ENCODE measurements at regions of chr18 and their contacts with region 1.

Region 1: DNA sequence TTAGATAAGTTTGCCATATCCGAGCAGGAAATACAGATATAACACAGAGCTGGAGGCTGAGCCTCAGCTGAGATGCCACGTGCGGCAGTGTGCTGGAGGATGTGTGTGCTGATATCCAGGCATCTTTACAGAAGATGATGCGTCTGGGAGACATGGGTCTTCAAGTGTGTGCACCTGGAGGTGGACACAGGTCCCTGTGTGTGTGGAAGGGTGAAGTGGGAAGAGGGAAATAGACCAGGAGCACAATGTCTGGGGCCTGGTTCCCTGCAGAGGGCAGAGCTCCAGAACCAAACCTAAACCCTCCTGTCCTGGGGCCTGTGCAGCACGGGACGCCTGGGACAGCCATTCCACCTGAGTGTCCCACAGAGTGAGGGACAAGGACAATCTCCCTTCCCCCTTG is 180.3 kb upstream of the RAB12 start:
- DNase-seq: no peak
- H3K4me3 ChIP-seq: no peak overlapping the region
- H3K27ac ChIP-seq: no peak overlapping the region
- H3K4me1 ChIP-seq: no peaks in the 10 kb centered on the region
- H3K27me3 ChIP-seq: no peaks in the 10 kb centered on the region
- CTCF ChIP-seq: no peak
- POLR2A ChIP-seq: no peak

Region 2: GRCh38 chr18:7902399-7902839 is 526.5 kb before region 1 on chr18:
- intact Hi-C with region 1: no loop called
- DNase-seq: no peak
- H3K4me3 ChIP-seq: no peak overlapping the region
- H3K27ac ChIP-seq: no peak overlapping the region
- H3K4me1 ChIP-seq: no peaks in the 10 kb centered on the region
- H3K27me3 ChIP-seq: no peaks in the 10 kb centered on the region
- CTCF ChIP-seq: no peak
- POLR2A ChIP-seq: no peak

Region 3: GRCh38 chr18:8011905-8012304 is 417.0 kb before region 1 on chr18:
- intact Hi-C with region 1: no loop called
- DNase-seq: no peak
- H3K4me3 ChIP-seq: no peak overlapping the region
- H3K27ac ChIP-seq: no peak overlapping the region
- H3K4me1 ChIP-seq: no peaks in the 10 kb centered on the region
- H3K27me3 ChIP-seq: no peaks in the 10 kb centered on the region
- CTCF ChIP-seq: no peak
- POLR2A ChIP-seq: no peak

Region 4: GRCh38 chr18:8367217-8367988 is 61.5 kb before region 1 on chr18:
- intact Hi-C with region 1: loop called (anchors 2 kb)
- DNase-seq: no peak
- H3K4me3 ChIP-seq: peak overlapping the region; percentile 26 to 63 (median 42)
- H3K27ac ChIP-seq: no peak overlapping the region
- H3K4me1 ChIP-seq: no peaks in the 10 kb centered on the region
- H3K27me3 ChIP-seq: no peaks in the 10 kb centered on the region
- CTCF ChIP-seq: peak in 2 of 3 donors; percentile 10 to 31
- POLR2A ChIP-seq: no peak